CD8-positive, alpha-beta T cell (primary cell): ENCODE measurements at regions of chr15 and their contacts with region 1.

Region 1: DNA sequence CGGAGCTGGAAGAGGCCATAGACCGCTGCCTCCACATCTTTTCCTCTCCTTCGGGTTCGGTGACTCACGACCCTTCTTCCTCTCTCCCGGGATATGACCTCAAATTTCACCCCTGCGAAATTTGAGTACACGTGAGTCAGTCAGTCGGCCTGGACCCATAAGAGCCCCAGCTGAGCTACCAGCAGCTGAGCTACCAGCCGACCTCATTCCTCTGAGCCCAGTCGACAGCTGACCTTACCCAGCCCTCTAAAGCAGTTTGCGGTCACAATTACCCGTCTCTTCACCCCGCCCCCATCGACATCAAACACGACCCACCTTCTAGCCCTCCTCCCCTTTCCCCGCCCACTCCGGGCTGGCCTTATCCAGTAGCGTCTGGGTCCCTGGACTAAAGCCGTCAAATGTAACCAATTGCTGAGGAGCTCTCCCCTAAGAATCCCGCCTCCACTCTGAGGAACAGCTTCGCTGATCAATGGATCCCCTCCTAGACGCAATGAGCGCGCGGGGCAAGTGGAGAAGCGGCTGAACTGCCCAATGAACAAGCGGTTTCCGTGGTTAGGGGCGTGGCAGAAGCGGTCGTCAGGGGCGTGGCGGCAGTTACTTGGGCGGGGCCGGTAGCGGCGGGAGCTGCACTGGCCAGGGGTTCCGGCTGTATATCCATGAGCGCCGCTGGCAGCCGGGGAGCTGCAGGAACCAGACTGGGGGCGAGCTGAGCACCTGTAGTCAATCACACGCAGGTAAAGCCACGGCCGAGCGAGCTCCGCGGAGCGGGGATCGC is at the start of gene ABHD2:
- DNase-seq: peak; percentile 94 to 99 (median 98)
- ATAC-seq: peak; percentile 94
- H3K4me3 ChIP-seq: peak within 1 kb of the TSS; percentile 65 to 87
- H3K4me3 Mint-ChIP-seq: no peak within 1 kb of the TSS
- H3K27ac ChIP-seq: peak within 1 kb of the TSS; percentile 50 to 69
- H3K27ac Mint-ChIP-seq: peak within 1 kb of the TSS; percentile 70
- H3K4me1 ChIP-seq: peaks cover 43% of the 10 kb centered on the region
- H3K4me1 Mint-ChIP-seq: peaks cover 35% of the 10 kb centered on the region
- H3K27me3 ChIP-seq: no peaks in the 10 kb centered on the region
- H3K27me3 Mint-ChIP-seq: no peaks in the 10 kb centered on the region
- CTCF ChIP-seq: no peak
- total RNA-seq, gene ABHD2: 22.2 to 25.7 TPM

Region 2: DNA sequence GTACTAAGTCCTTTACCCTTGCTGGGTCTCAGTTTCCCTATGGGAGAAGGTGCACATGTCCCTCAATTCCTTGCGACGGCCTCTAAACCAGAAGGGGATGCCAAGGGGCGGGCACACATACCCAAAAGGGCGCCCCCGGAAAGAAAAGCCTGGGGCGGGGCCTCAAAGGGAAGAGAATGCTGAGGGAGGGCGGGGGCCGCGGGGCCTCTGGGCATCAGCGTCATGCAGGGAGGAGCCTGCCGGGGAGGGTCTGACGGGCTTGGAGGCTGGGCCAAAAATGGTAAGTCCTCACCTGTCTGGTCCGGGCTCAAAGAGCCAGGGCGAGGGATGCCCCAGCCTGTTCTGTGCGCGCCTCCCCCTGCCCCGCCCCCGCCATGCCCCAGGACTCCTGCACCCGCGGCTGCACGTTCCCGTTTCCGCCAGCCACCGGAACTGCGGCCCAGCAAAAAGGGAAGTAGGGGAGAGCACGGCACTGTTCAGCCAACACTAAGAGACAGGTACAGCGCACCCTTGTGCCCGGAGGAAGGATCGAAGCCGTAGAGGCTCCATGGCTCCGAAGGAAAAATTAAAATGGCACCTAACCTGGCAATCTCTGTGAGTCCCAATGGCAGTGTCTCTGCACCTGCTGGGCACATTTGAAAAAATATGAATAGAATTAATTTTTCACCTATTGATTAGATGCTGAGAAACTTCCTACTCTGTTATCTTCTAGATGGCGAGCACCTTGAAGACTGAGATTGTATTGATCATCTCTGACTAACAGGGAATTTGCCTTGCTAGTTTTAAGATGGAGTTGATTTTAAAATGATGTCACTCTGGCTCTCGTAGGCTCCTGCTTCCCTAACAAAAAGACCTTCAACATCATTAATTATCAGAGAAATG is 541.5 kb before region 1 on chr15 and contains the start of gene DET1:
- CTCF ChIA-PET with region 1: no interaction called
- POLR2A ChIA-PET with region 1: no interaction called
- intact Hi-C with region 1: loop called (anchors 2 to 5 kb)
- DNase-seq: peak; percentile 87 to 98 (median 94)
- ATAC-seq: peak; percentile 91
- H3K4me3 ChIP-seq: peak within 1 kb of the TSS; percentile 60 to 62
- H3K4me3 Mint-ChIP-seq: peak within 1 kb of the TSS; percentile 91
- H3K27ac ChIP-seq: peak within 1 kb of the TSS; percentile 72 to 80
- H3K27ac Mint-ChIP-seq: peak within 1 kb of the TSS; percentile 96
- H3K4me1 ChIP-seq: peaks cover 6% of the 10 kb centered on the region
- H3K4me1 Mint-ChIP-seq: peaks cover 18% of the 10 kb centered on the region
- H3K27me3 ChIP-seq: no peaks in the 10 kb centered on the region
- H3K27me3 Mint-ChIP-seq: no peaks in the 10 kb centered on the region
- CTCF ChIP-seq: peak; percentile 70
- total RNA-seq, gene DET1: 1.4 to 2.0 TPM

Region 3: DNA sequence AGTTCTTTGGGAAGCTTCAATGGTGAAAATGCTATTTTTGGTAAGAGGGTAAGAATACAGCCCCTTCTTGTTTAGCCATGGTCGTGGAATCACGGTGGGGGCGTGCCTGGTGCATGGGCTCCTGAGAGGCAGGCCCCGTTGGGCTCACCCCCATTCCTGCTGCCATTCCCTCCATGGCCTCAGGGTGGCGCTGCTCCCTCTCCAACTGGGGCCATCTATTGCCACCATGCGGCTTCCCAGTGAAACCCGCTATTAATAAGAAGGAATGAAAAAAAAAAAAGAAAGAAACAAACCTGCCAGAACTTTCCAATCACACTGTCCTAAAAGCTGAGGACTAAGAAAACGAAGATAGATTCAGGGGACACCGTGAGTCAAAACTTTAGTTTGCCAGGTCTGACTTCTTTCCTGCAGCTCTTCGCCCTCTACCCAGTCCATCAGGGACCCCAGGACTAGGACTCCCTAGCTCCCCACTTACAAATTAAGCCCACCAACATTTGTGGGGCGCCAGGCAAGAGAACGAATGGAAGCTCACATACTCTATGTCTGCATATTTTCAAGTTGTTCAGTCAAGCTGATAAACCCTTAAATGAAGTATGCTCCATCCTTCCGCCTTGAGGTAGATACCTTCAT is 30.4 kb before region 1 on chr15:
- CTCF ChIA-PET with region 1: interaction called, 11 read pairs
- POLR2A ChIA-PET with region 1: interaction called, 4 read pairs
- intact Hi-C with region 1: loop called in 1 of 2 experiments (anchors 1 kb)
- DNase-seq: peak; percentile 61 to 90 (median 82)
- ATAC-seq: peak; percentile 100
- H3K4me3 ChIP-seq: no peak overlapping the region
- H3K4me3 Mint-ChIP-seq: no peak overlapping the region
- H3K27ac ChIP-seq: no peak overlapping the region
- H3K27ac Mint-ChIP-seq: no peak overlapping the region
- H3K4me1 ChIP-seq: no peaks in the 10 kb centered on the region
- H3K4me1 Mint-ChIP-seq: peaks cover 2% of the 10 kb centered on the region
- H3K27me3 ChIP-seq: no peaks in the 10 kb centered on the region
- H3K27me3 Mint-ChIP-seq: no peaks in the 10 kb centered on the region
- CTCF ChIP-seq: peak; percentile 99

Region 4: DNA sequence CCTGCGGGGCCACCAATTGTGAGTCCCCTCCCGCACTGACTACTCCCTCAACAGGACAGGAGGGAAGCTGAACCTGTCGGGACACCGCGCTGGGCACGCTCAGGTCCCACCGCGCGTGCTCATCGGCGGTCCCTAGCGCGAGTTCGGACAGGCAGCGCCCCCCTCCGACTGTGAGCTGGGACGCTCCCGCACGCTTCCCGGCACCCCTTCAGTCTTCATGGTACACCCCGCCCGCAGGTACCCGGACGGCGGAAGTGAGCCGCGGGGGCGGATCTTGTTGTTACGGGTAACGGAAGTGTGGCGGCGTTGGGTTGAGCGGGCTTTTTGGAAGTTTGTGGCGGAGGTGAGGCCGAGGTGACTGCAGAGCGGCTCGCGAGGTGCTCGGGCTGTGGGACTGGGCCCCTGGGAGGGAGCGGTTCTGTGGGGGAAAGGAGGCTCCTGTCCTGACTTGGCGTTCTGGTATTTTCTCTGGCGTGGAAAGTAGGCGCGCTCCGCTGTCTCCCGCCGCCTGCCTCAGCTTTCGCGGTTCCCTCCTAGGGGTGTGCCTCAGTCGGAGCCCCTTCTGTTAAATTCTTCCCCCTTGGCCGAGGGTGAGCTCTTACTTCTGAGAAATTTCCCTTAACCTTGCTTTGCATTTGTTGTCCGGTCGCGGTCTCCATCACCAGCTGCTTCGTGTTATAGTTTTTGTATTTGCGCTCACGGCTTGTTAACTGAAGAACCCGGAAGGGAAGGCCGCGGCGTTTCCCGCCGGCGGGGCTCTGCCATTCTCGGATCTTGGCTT is 155.9 kb after region 1 on chr15 and contains the start of gene FANCI:
- CTCF ChIA-PET with region 1: no interaction called
- POLR2A ChIA-PET with region 1: interaction called, 3 read pairs
- intact Hi-C with region 1: loop called (anchors 1 to 2 kb)
- DNase-seq: peak; percentile 93 to 98 (median 97)
- ATAC-seq: peak; percentile 98
- H3K4me3 ChIP-seq: peak within 1 kb of the TSS; percentile 77 to 85
- H3K4me3 Mint-ChIP-seq: peak within 1 kb of the TSS; percentile 95
- H3K27ac ChIP-seq: peak within 1 kb of the TSS; percentile 24 to 52
- H3K27ac Mint-ChIP-seq: peak within 1 kb of the TSS; percentile 90
- H3K4me1 ChIP-seq: peaks cover 15% of the 10 kb centered on the region
- H3K4me1 Mint-ChIP-seq: peaks cover 25% of the 10 kb centered on the region
- H3K27me3 ChIP-seq: no peaks in the 10 kb centered on the region
- H3K27me3 Mint-ChIP-seq: no peaks in the 10 kb centered on the region
- CTCF ChIP-seq: no peak
- total RNA-seq, gene FANCI: 5.1 to 6.3 TPM

Region 5: GRCh38 chr15:89575146-89575655 is 487.2 kb after region 1 on chr15 and contains the start of gene TICRR:
- CTCF ChIA-PET with region 1: no interaction called
- POLR2A ChIA-PET with region 1: no interaction called
- intact Hi-C with region 1: loop called (anchors 10 kb)
- DNase-seq: peak; percentile 88 to 99 (median 92)
- ATAC-seq: peak; percentile 98
- H3K4me3 ChIP-seq: peak within 1 kb of the TSS; percentile 58 to 86
- H3K4me3 Mint-ChIP-seq: peak within 1 kb of the TSS; percentile 82
- H3K27ac ChIP-seq: no peak within 1 kb of the TSS
- H3K27ac Mint-ChIP-seq: peak within 1 kb of the TSS; percentile 13
- H3K4me1 ChIP-seq: peaks cover 6% of the 10 kb centered on the region
- H3K4me1 Mint-ChIP-seq: peaks cover 11% of the 10 kb centered on the region
- H3K27me3 ChIP-seq: no peaks in the 10 kb centered on the region
- H3K27me3 Mint-ChIP-seq: peaks cover 11% of the 10 kb centered on the region
- CTCF ChIP-seq: no peak
- total RNA-seq, gene TICRR: 0.11 TPM in 1 of 2 experiments, not detected in the other